ENCODE measurements at regions of chr1 and their contacts with region 1.

Region 1: GRCh38 chr1:200510228-200510623 is 100.4 kb upstream of the ZNF281 start:
- DNase-seq: no peak

Region 2: DNA sequence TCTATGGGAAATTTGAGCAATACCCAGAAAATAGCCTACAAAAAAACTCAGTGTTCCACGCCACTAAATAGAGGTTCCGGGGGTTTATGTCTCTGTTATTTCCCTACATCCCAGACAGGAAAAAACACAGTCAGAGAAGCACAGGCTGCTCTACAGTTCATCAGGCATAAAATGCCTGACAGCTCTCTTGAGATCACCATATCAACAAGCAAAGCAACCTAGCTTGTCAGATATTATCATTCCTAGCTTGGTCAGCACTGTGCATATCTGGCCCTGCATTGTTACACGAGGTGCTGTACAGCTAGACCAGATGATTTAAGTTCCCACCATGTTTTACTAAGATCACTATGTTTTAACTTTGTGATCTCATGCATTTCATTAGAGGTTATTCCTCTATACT is 1698.8 kb before region 1 on chr1:
- intact Hi-C with region 1: loop called in 1 of 2 experiments (anchors 5 kb)
- DNase-seq: no peak